ENCODE measurements at regions of chr1 and their contacts with region 1.

Region 1: GRCh38 chr1:53959664-53960250 is 13.6 kb downstream of the LRRC42 start:
- DNase-seq: no peak
- ATAC-seq: no peak
- H3K4me3 Mint-ChIP-seq: no peak overlapping the region
- H3K27ac Mint-ChIP-seq: no peak overlapping the region
- H3K4me1 Mint-ChIP-seq: peaks cover 24% of the 10 kb centered on the region
- H3K27me3 Mint-ChIP-seq: no peaks in the 10 kb centered on the region
- CTCF ChIP-seq: peak; percentile 38; the same call in 1 of the 2 replicates

Region 2: GRCh38 chr1:53860967-53861411 is 98.8 kb before region 1 on chr1:
- CTCF ChIA-PET with region 1: interaction called, 70 read pairs
- POLR2A ChIA-PET with region 1: no interaction called
- DNase-seq: peak; percentile 44
- ATAC-seq: peak; percentile 97
- H3K4me3 Mint-ChIP-seq: no peak overlapping the region
- H3K27ac Mint-ChIP-seq: peak overlapping the region; percentile 46
- H3K4me1 Mint-ChIP-seq: peaks cover 5% of the 10 kb centered on the region
- H3K27me3 Mint-ChIP-seq: no peaks in the 10 kb centered on the region
- CTCF ChIP-seq: peak; percentile 57

Region 3: DNA sequence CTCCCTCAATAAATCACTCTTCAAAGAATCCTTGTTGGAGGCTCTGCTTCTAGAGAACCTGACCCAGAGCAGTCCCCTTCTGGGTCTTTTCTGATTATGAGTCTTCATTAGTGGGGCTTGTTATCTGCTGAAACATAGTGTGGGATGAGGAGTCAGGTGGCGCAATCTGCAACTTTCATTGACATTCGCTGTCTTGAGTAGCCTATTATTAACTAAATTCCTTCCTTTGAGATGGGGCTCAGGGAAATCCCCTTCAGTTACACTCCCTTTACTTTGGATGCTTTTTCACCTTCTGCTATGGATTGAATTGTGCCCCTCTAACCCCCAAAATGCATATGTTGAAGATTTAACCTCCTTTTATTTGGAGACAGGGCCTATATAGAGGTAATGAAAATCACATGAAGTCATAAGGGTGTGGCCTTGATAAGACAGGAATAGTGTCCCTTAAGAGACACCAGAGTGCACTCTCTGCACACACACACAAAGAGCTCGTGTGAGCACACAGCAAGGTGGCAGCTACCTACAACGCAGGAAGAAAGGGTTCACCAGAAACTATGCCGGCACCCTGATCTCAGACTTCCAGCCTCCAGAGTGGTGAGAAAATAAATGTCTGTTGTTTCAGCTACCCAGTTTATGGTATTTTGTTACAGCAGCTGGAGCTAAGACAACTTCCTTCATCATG is 46.3 kb before region 1 on chr1:
- CTCF ChIA-PET with region 1: interaction called, 15 read pairs
- POLR2A ChIA-PET with region 1: no interaction called
- DNase-seq: no peak
- ATAC-seq: peak; percentile 72
- H3K4me3 Mint-ChIP-seq: peak overlapping the region; percentile 31
- H3K27ac Mint-ChIP-seq: peak overlapping the region; percentile 82; the same call in 1 of the 2 replicates
- H3K4me1 Mint-ChIP-seq: peaks cover 29% of the 10 kb centered on the region
- H3K27me3 Mint-ChIP-seq: no peaks in the 10 kb centered on the region
- CTCF ChIP-seq: no peak